ENCODE measurements at regions of chr1 and their contacts with region 1.

Region 1: GRCh38 chr1:247373721-247374141 is 42.1 kb upstream of the ZNF496 start:
- DNase-seq: peak; percentile 54 to 60
- ATAC-seq: peak; percentile 48 to 87 (median 62)
- H3K4me3 ChIP-seq: peak overlapping the region in 8 of 10 donors; percentile 27 to 53 (median 41)
- H3K27ac ChIP-seq: peak overlapping the region in 1 of 10 donors; percentile 38
- H3K4me1 ChIP-seq: peaks cover 0 to 13% (median 0%) of the 10 kb centered on the region in 9 donors
- H3K27me3 ChIP-seq: peaks cover 0 to 14% (median 3%) of the 10 kb centered on the region in 7 donors
- CTCF ChIP-seq: peak in 7 of 9 donors; percentile 37 to 67 (median 56)

Region 2: DNA sequence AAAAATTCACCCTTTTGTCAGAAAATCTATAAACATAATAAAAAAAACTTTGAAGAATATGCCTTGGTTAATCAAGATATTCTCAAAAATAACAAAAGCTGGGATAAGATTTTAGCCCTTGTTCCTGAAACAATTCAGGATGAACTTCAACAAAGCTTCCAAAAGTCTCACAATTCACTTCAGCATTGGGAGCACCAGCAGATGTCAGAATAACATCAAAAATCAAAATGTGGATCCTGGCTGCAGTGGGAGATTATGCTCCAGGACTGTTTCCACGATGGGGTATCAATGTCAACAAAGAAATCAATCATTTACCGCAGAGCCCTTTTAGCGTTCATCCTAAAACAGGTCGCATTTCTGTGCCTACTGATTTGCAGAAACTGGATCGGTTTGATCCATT is 330.3 kb before region 1 on chr1:
- intact Hi-C with region 1: loop called in 4 of 10 experiments (anchors 5 to 10 kb)
- DNase-seq: no peak
- ATAC-seq: no peak
- H3K4me3 ChIP-seq: no peak overlapping the region
- H3K27ac ChIP-seq: no peak overlapping the region
- H3K4me1 ChIP-seq: no peaks in the 10 kb centered on the region
- H3K27me3 ChIP-seq: no peaks in the 10 kb centered on the region
- CTCF ChIP-seq: peak in 5 of 9 donors; percentile 22 to 55 (median 35)

Region 3: GRCh38 chr1:247331172-247331991 is 42.3 kb before region 1 on chr1 and contains the start of gene ZNF496:
- intact Hi-C with region 1: loop called in 2 of 10 experiments (anchors 5 kb)
- DNase-seq: peak; percentile 83 to 86
- ATAC-seq: peak; percentile 72 to 87 (median 82)
- H3K4me3 ChIP-seq: peak within 1 kb of the TSS; percentile 69 to 98 (median 94)
- H3K27ac ChIP-seq: peak within 1 kb of the TSS; percentile 59 to 97 (median 94)
- H3K4me1 ChIP-seq: peaks cover 5 to 58% (median 40%) of the 10 kb centered on the region in 9 donors
- H3K27me3 ChIP-seq: no peaks in the 10 kb centered on the region
- CTCF ChIP-seq: no peak
- total RNA-seq, gene ZNF496: 11.4 to 18.4 (median 14.5) TPM

Region 4: DNA sequence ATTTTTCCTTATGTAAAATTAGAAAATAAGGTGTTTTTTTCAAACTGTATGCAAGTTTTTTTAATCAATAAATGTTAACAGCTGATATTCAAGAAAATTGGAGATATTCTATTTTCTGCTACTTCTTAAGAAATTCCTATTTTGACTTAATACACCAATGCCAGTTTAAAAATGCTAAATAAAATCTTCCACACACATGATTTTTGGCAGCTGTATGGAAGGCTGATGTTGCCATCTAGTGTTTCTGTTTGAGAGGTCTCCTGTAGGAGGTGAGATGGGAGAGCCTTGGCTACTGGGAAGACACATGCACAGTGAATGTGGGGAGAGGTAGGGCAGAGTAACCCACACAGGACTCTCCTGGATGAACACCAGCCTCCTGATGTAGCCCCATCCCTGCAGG is 113.3 kb after region 1 on chr1:
- intact Hi-C with region 1: loop called in 1 of 10 experiments (anchors 5 kb)
- DNase-seq: no peak
- ATAC-seq: peak in 7 of 8 donors; percentile 30 to 79 (median 63)
- H3K4me3 ChIP-seq: no peak overlapping the region
- H3K27ac ChIP-seq: no peak overlapping the region
- H3K4me1 ChIP-seq: no peaks in the 10 kb centered on the region
- H3K27me3 ChIP-seq: peaks cover 0 to 34% (median 7%) of the 10 kb centered on the region in 7 donors
- CTCF ChIP-seq: peak; percentile 11 to 66 (median 50)

Measured in heart right ventricle (tissue), 16 donors.